Psoas muscle (tissue), 8 donors: ENCODE measurements at regions of chr16 and their contacts with region 1.

Region 1: GRCh38 chr16:2340564-2341455 is at the start of gene ABCA3:
- DNase-seq: peak; percentile 94 to 96
- ATAC-seq: peak; percentile 94 to 97 (median 96)
- H3K4me3 ChIP-seq: peak within 1 kb of the TSS; percentile 83
- H3K27ac ChIP-seq: peak within 1 kb of the TSS; percentile 50
- H3K4me1 ChIP-seq: peaks cover 10% of the 10 kb centered on the region
- H3K27me3 ChIP-seq: no peaks in the 10 kb centered on the region
- CTCF ChIP-seq: peak; percentile 100
- total RNA-seq, gene ABCA3: 8.6 to 9.4 (median 9.0) TPM

Region 2: GRCh38 chr16:2267913-2268666 is 72.7 kb before region 1 on chr16 and contains the start of gene RNPS1:
- intact Hi-C with region 1: loop called in 1 of 2 experiments (anchors 5 kb)
- DNase-seq: peak; percentile 97 to 99
- ATAC-seq: peak; percentile 95 to 97 (median 96)
- H3K4me3 ChIP-seq: peak within 1 kb of the TSS; percentile 73
- H3K27ac ChIP-seq: peak within 1 kb of the TSS; percentile 97
- H3K4me1 ChIP-seq: peaks cover 28% of the 10 kb centered on the region
- H3K27me3 ChIP-seq: no peaks in the 10 kb centered on the region
- CTCF ChIP-seq: no peak
- total RNA-seq, gene RNPS1: 165 to 251 (median 187) TPM

Region 3: GRCh38 chr16:2429034-2429770 is 88.4 kb after region 1 on chr16 and contains the start of gene CCNF:
- intact Hi-C with region 1: loop called (anchors 5 kb)
- DNase-seq: peak; percentile 98 to 99
- ATAC-seq: peak; percentile 98 to 100 (median 99)
- H3K4me3 ChIP-seq: peak within 1 kb of the TSS; percentile 85
- H3K27ac ChIP-seq: peak within 1 kb of the TSS; percentile 80
- H3K4me1 ChIP-seq: peaks cover 8% of the 10 kb centered on the region
- H3K27me3 ChIP-seq: no peaks in the 10 kb centered on the region
- CTCF ChIP-seq: no peak
- total RNA-seq, gene CCNF: 1.2 to 1.8 (median 1.7) TPM